Gastrocnemius medialis (tissue), 4 donors: ENCODE measurements at regions of chr13 and their contacts with region 1.

Region 1: DNA sequence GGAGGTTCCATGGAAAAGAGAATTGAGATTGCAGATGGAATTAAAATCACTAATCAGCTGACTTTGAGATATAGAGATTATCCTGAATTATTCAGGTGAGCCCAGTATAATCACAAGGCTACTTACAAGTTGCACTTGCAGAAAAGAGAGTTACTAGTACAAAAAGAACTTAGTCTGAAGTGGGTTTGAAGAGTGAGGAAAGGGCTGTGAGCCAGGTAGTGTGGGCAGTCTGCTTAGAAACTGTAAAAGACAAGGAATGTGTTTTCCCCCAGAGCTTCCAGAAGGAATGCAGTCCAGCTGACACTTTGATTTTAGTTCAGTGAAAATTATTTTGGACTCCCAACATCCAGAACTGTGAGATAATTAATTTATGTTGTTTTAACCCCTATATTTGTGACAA is 285.4 kb upstream of the GPC6 start:
- DNase-seq: no peak
- ATAC-seq: no peak
- H3K4me3 ChIP-seq: no peak overlapping the region
- H3K27ac ChIP-seq: no peak overlapping the region
- H3K4me1 ChIP-seq: no peaks in the 10 kb centered on the region
- H3K27me3 ChIP-seq: no peaks in the 10 kb centered on the region
- CTCF ChIP-seq: no peak
- POLR2A ChIP-seq: no peak

Region 2: DNA sequence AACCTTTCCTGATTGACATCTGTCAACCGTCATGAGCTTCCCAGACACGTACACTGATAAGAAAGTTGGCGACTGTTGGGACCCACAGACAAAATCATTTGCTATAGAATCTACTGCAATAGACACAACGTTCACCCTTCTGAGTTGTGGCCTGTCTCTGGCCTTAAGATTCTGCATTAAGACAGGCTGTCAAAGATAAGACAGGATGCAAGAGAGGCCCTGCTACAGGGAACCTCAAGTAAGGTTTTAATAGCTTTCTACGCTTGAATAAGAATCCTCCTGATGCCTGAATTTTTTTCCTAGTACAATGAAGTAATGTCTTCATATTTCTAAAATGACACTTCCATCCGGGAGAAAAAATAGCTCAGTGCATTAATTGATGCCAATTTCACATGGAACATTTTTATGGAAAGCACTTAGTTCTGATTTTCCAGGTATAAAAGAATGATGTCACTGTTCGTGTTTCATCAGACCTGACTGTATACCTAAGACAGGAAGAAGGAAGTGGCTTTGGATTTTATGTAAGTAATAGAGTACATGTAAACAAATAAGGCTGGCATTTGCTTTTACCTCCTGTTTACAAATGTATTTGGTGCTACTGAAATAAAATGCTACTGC is 10.2 kb after region 1 on chr13:
- in situ Hi-C with region 1: no loop called
- intact Hi-C with region 1: no loop called
- DNase-seq: no peak
- ATAC-seq: no peak
- H3K4me3 ChIP-seq: no peak overlapping the region
- H3K27ac ChIP-seq: no peak overlapping the region
- H3K4me1 ChIP-seq: no peaks in the 10 kb centered on the region
- H3K27me3 ChIP-seq: no peaks in the 10 kb centered on the region
- CTCF ChIP-seq: no peak
- POLR2A ChIP-seq: no peak

Region 3: DNA sequence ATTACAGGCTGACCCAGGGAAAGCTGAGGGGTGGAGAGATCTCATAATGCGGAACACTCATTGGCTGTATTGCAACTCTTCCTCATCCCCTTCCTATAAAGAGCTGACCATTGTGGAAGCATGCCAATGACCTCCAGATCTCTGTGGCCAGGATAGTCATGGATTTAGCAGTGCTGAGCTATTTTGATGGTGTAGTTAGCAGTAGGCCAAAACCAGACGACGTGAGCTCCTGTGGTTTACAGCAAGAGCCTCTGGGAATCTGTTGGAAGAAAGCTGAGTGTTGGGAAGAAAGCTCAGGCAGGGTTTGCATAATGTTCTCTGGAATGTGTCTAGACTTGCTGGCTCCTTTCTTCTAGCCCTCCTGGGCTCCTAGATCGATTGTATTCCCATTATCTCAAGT is 98.0 kb after region 1 on chr13:
- in situ Hi-C with region 1: loop called in 1 of 4 experiments (anchors 25 kb)
- intact Hi-C with region 1: no loop called
- DNase-seq: no peak
- ATAC-seq: no peak
- H3K4me3 ChIP-seq: no peak overlapping the region
- H3K27ac ChIP-seq: no peak overlapping the region
- H3K4me1 ChIP-seq: no peaks in the 10 kb centered on the region
- H3K27me3 ChIP-seq: no peaks in the 10 kb centered on the region
- CTCF ChIP-seq: no peak
- POLR2A ChIP-seq: no peak

Region 4: GRCh38 chr13:94154389-94154788 is 1213.2 kb after region 1 on chr13:
- in situ Hi-C with region 1: no loop called
- intact Hi-C with region 1: no loop called
- DNase-seq: peak; percentile 16 to 28
- ATAC-seq: peak in 1 of 2 donors; percentile 55
- H3K4me3 ChIP-seq: no peak overlapping the region
- H3K27ac ChIP-seq: no peak overlapping the region
- H3K4me1 ChIP-seq: peaks cover 0 to 31% of the 10 kb centered on the region in 2 donors
- H3K27me3 ChIP-seq: no peaks in the 10 kb centered on the region
- CTCF ChIP-seq: no peak
- POLR2A ChIP-seq: no peak